H1 (cell line): ENCODE measurements at regions of chr6 and their contacts with region 1.

Region 1: DNA sequence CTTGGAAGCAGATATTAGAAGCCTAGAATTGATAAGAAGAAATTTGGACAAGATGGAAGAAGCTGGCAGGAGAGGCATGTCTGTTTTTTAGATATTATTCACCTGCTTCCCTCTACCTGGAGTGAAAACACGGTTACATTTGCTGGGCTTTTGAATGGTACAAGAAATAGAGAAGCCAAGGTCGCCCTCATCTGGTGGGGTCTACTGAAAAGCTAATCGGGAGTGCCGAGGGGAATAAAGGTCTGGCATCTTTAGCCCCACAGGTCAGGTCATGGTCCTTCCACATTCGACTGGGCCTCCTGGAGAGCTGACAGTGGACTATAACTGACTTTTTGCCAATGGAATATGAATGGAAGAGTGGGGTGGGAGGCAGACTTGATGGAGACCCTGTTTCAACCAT is 4.6 kb upstream of the C2 start:
- DNase-seq: no peak
- H3K4me3 ChIP-seq: no peak overlapping the region
- H3K27ac ChIP-seq: no peak overlapping the region
- H3K4me1 ChIP-seq: no peaks in the 10 kb centered on the region
- H3K27me3 ChIP-seq: no peaks in the 10 kb centered on the region
- CTCF ChIP-seq: peak; percentile 32 to 57 (median 55)
- EP300 ChIP-seq: no peak
- POLR2A ChIP-seq: no peak
- RAD21 ChIP-seq: peak; percentile 68 to 76

Region 2: GRCh38 chr6:31888276-31889258 is 34.4 kb before region 1 on chr6:
- CTCF ChIA-PET with region 1: interaction called, 26 read pairs
- POLR2A ChIA-PET with region 1: interaction called, 3 read pairs
- DNase-seq: peak in 1 of 2 experiments; percentile 89
- H3K4me3 ChIP-seq: no peak overlapping the region
- H3K27ac ChIP-seq: no peak overlapping the region; the same call in 1 of the 2 replicates
- H3K4me1 ChIP-seq: no peaks in the 10 kb centered on the region
- H3K27me3 ChIP-seq: no peaks in the 10 kb centered on the region
- CTCF ChIP-seq: peak in 2 of 3 experiments; percentile 72 to 75; a peak in 3 of 4 replicates
- EP300 ChIP-seq: no peak
- POLR2A ChIP-seq: no peak
- RAD21 ChIP-seq: peak; percentile 50 to 70

Region 3: DNA sequence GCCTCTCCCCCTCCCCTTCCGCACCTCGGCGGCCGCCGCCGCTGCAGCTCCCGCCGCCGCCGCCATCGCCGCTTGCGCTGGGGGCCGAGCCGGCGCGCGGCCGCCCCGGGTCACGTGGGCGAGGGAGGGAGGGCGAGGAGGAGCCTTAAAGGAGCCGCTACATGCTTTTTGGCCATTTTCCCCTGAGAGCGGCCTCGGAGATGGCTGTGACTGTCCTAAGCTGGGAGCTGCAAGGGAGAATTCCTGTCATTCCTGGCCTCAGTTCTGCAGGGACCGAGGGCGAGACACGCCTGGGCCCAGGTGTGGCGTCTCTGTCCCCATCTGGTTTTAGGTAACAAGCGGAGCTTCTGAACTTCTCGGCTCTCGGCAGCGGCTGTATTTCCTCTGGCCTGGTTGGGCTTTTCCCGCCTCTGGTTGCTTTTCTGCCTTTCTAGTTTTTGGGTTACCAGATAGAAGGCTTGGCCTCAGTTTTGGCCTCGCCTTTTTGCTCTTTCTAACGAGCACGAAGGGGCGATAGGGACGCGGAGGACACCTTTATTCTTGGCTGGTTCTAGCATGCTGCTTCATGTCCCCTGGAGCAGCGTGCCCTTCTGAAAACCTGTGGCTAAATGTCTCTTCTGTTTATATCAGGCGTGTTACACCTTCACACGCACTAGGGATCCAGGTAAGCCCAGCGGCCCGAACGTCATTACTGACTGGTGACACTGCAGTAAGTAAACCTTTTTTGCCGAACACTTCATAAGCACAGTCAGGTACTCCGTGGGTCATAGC is 25.1 kb before region 1 on chr6 and contains the start of gene EHMT2:
- CTCF ChIA-PET with region 1: interaction called, 11 read pairs
- POLR2A ChIA-PET with region 1: interaction called, 12 read pairs
- DNase-seq: peak in 1 of 2 experiments; percentile 89
- H3K4me3 ChIP-seq: peak within 1 kb of the TSS; percentile 74 to 97 (median 82)
- H3K27ac ChIP-seq: peak within 1 kb of the TSS; percentile 55; the same call in 1 of the 2 replicates
- H3K4me1 ChIP-seq: peaks cover 0 to 14% (median 6%) of the 10 kb centered on the region in 4 experiments; a peak in 6 of 7 replicates
- H3K27me3 ChIP-seq: no peaks in the 10 kb centered on the region
- CTCF ChIP-seq: no peak
- EP300 ChIP-seq: no peak
- POLR2A ChIP-seq: peak; percentile 72 to 84
- RAD21 ChIP-seq: no peak
- total RNA-seq, gene EHMT2: 177 and 183 TPM in 2 replicates

Region 4: DNA sequence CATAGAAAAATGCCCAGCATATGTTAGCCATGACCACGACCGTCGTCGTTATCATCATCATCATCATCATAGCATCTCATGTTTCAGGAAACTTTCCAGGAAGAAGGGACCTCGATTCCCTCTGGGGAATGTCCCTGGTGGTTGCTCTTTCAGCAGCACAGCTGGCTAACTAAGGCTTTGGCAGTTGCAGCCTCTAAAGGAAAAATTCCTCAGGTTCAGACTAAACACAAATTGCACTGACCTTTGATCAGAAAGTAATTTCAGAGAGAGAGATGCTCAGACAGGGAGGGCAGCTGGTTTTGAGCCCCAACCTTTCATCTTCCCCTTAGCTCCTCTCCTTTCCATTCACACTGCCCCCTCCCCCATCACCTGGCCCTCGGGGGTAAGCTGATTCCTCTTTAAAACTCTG is 17.3 kb after region 1 on chr6:
- CTCF ChIA-PET with region 1: interaction called, 20 read pairs
- POLR2A ChIA-PET with region 1: interaction called, 4 read pairs
- DNase-seq: no peak
- H3K4me3 ChIP-seq: no peak overlapping the region
- H3K27ac ChIP-seq: no peak overlapping the region
- H3K4me1 ChIP-seq: 0 out of 7 replicates have a peak, but pooled peaks cover 0 to 2% (median 0%) of the 10 kb centered on the region in 4 experiments
- H3K27me3 ChIP-seq: peaks cover 0 to 6% (median 0%) of the 10 kb centered on the region in 4 experiments; a peak in 1 of 7 replicates
- CTCF ChIP-seq: no peak
- EP300 ChIP-seq: no peak
- POLR2A ChIP-seq: no peak
- RAD21 ChIP-seq: no peak

Region 5: GRCh38 chr6:31945507-31946369 is 22.8 kb after region 1 on chr6 and contains the start of gene CFB:
- CTCF ChIA-PET with region 1: interaction called, 43 read pairs
- POLR2A ChIA-PET with region 1: interaction called, 4 read pairs
- DNase-seq: no peak
- H3K4me3 ChIP-seq: no peak within 1 kb of the TSS
- H3K27ac ChIP-seq: no peak within 1 kb of the TSS
- H3K4me1 ChIP-seq: peaks cover 0 to 2% (median 0%) of the 10 kb centered on the region in 4 experiments; a peak in 1 of 7 replicates
- H3K27me3 ChIP-seq: peaks cover 0 to 11% (median 2%) of the 10 kb centered on the region in 4 experiments; a peak in 3 of 7 replicates
- CTCF ChIP-seq: no peak
- EP300 ChIP-seq: no peak
- POLR2A ChIP-seq: no peak
- RAD21 ChIP-seq: no peak
- total RNA-seq, gene CFB: not detected in 2 replicates